ENCODE measurements at regions of chr2 and their contacts with region 1.

Region 1: DNA sequence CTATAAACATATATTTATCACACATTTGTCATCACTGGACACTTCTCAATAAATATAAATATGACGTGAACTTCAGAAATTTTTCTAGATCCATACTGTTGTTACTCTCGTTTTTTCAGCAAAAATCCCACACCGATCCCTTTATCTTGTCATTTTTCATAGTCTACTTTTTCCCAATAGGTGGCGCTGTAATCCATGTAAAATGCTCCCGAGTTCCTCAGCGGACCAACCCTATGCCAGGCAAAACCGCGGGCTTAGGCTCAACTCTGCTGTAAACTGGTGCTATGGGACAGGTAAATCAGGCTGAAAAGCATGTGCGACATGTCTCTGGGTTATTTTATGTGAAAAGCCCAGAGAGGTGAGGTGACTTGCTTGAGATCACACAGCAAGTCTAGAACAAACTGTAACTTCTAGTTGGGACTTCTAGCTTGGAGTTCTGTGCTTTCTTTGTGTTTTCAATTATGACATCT is 104.0 kb downstream of the COBLL1 start:
- DNase-seq: peak; percentile 56 to 71 (median 62)
- ATAC-seq: peak; percentile 74 to 88 (median 85)
- H3K4me3 ChIP-seq: no peak overlapping the region
- H3K27ac ChIP-seq: peak overlapping the region in 2 of 4 donors; percentile 34 to 45
- H3K4me1 ChIP-seq: peaks cover 24 to 59% (median 38%) of the 10 kb centered on the region in 3 donors
- H3K27me3 ChIP-seq: no peaks in the 10 kb centered on the region
- CTCF ChIP-seq: peak; percentile 25 to 57 (median 48)

Region 2: GRCh38 chr2:164554487-164554886 is 183.2 kb before region 1 on chr2:
- intact Hi-C with region 1: no loop called
- DNase-seq: no peak
- ATAC-seq: peak in 3 of 4 donors; percentile 37 to 57 (median 49)
- H3K4me3 ChIP-seq: no peak overlapping the region
- H3K27ac ChIP-seq: no peak overlapping the region
- H3K4me1 ChIP-seq: peaks cover 6 to 14% (median 11%) of the 10 kb centered on the region in 3 donors
- H3K27me3 ChIP-seq: no peaks in the 10 kb centered on the region
- CTCF ChIP-seq: no peak

Region 3: GRCh38 chr2:164792316-164793178 is 54.9 kb after region 1 on chr2:
- intact Hi-C with region 1: no loop called
- DNase-seq: no peak
- ATAC-seq: no peak
- H3K4me3 ChIP-seq: no peak overlapping the region
- H3K27ac ChIP-seq: no peak overlapping the region
- H3K4me1 ChIP-seq: peaks cover 5 to 33% (median 29%) of the 10 kb centered on the region in 3 donors
- H3K27me3 ChIP-seq: no peaks in the 10 kb centered on the region
- CTCF ChIP-seq: no peak

Region 4: DNA sequence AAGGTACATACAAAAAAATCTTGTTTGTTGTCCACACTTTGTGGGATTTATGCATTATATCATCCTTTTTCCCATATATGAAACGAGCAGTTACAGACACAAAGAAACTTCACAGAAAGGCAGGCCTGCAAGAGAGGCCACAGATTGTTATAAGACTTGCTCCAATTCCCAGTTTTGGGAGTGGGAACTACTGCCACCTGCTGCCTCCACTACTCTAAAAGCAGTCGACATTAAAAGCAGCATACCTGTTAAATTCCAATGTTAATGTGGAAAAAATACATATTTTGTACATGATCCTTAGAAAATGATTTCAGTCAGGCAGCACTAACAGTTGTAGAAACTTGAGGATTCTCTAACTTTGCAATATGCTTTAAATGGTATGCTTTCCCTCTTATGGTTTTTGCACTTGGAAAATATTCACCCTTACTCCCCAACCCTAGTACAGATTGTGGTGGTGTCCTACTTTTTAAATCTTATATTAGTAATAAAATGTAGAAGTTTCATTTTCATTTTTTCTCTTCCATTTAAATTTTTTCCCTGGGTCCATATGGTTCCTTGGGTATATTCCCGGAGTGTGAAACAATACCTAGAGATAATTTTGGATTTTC is 179.8 kb after region 1 on chr2:
- intact Hi-C with region 1: loop called in 2 of 3 experiments (anchors 5 to 10 kb)
- DNase-seq: peak in 4 of 6 donors; percentile 31 to 74 (median 59)
- ATAC-seq: peak; percentile 42 to 74 (median 65)
- H3K4me3 ChIP-seq: no peak overlapping the region
- H3K27ac ChIP-seq: no peak overlapping the region
- H3K4me1 ChIP-seq: peaks cover 24 to 35% (median 28%) of the 10 kb centered on the region in 3 donors
- H3K27me3 ChIP-seq: no peaks in the 10 kb centered on the region
- CTCF ChIP-seq: peak in 3 of 4 donors; percentile 34 to 40 (median 36)

Measured in pancreas (tissue), 10 donors.